AG04450 (cell line): ENCODE measurements at regions of chr12 and their contacts with region 1.

Region 1: DNA sequence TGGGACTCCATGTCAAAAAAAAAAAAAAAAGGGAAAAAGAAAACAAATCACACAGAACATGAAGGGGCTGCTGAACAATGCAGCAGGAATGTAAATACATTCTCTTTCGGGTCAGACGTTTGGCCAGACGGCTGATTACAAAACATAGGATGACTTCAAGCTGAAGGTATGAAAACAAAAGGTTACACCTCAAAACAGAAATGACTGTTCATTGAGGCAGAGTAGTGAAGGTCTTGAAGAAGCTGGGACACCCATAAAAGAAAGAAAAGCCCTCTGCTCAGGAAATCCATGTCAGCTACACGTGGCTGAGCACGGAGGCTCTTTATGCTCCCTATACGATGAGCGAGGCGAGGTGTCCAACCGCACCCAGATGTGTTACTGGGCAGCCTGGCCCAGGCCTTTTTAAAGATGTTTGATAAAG is 37.7 kb downstream of the FGD4 start:
- DNase-seq: peak; percentile 81
- H3K4me3 ChIP-seq: no peak overlapping the region
- H3K27ac ChIP-seq: no peak overlapping the region
- H3K27me3 ChIP-seq: no peaks in the 10 kb centered on the region
- CTCF ChIP-seq: no peak

Region 2: DNA sequence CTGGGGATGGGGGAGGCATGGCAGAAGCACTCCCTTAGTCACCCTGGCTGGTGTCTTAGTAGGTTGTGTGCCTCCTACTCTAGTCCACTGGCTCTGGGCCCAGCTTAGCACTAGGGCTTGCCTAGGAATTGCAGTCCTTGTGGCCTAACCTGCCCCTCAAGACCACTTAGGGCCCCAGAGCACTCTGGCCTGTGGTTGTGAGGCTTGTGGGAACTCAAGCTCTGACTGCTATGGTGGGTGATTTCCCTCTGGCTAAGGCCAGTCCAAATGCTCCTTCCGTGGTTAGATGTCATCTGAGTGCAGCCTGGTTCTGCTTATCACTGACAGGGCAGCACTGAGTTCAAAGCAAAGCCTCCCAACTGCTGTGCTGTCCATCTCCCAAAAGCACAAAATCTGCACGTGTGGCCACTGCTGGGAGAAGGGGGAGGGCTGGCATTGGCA is 17.6 kb before region 1 on chr12:
- CTCF ChIA-PET with region 1: interaction called, 3 read pairs
- POLR2A ChIA-PET with region 1: interaction called, 11 read pairs
- DNase-seq: no peak
- H3K4me3 ChIP-seq: no peak overlapping the region
- H3K27ac ChIP-seq: no peak overlapping the region
- H3K27me3 ChIP-seq: no peaks in the 10 kb centered on the region
- CTCF ChIP-seq: no peak

Region 3: GRCh38 chr12:32533971-32534590 is 97.0 kb after region 1 on chr12:
- CTCF ChIA-PET with region 1: no interaction called
- POLR2A ChIA-PET with region 1: interaction called, 14 read pairs
- DNase-seq: peak; percentile 95
- H3K4me3 ChIP-seq: peak overlapping the region; percentile 61
- H3K27ac ChIP-seq: peak overlapping the region; percentile 21
- H3K27me3 ChIP-seq: no peaks in the 10 kb centered on the region
- CTCF ChIP-seq: no peak